Naive thymus-derived CD4-positive, alpha-beta T cell (primary cell): ENCODE measurements at regions of chr6 and their contacts with region 1.

Region 1: GRCh38 chr6:16206595-16207037 is 31.8 kb upstream of the GMPR start:
- DNase-seq: peak in 7 of 9 donors; percentile 19 to 63 (median 54)
- ATAC-seq: peak; percentile 86
- H3K4me3 ChIP-seq: no peak overlapping the region
- H3K4me3 Mint-ChIP-seq: no peak overlapping the region
- H3K27ac ChIP-seq: no peak overlapping the region
- H3K27ac Mint-ChIP-seq: peak overlapping the region in 1 of 9 donors; percentile 48
- H3K4me1 ChIP-seq: no peaks in the 10 kb centered on the region
- H3K4me1 Mint-ChIP-seq: peaks cover 0 to 6% (median 0%) of the 10 kb centered on the region in 7 donors
- H3K27me3 ChIP-seq: no peaks in the 10 kb centered on the region
- H3K27me3 Mint-ChIP-seq: peaks cover 5 to 25% (median 19%) of the 10 kb centered on the region in 5 donors

Region 2: DNA sequence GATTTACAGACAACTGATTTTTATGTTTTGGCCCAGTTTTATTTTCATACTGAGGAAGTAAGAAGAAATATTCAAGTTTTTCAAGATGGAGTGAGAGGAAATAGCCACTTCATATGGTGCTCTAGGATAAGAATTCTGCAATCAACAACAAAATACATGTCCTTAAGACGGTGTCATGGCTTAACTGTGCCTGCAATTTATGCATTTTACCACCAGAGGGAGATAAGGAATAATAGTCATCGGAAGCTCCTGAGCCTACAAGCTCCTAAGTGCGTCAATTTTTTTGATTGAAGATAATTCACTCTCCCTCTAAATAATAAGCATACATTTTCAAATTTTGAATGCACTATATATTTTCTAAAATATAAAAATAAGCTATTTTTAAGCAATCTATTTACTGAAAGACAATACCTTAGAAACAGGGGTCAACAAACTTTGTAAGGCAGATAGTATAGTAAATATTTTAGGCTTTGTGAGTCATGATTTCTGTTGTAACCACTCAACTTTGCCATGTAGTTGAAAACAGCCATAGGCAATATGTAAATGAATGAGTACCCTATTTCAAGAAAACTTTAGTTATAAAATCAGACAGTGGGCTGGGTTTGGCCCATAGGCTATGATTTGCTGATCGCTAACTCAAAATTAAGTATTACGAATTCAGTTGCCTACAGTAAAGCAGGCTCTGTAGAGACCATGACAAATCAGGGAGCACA is 312.9 kb before region 1 on chr6:
- CTCF ChIA-PET with region 1: no interaction called
- POLR2A ChIA-PET with region 1: no interaction called
- intact Hi-C with region 1: loop called in 1 of 2 experiments (anchors 10 kb)
- DNase-seq: peak in 1 of 9 donors; percentile 5
- ATAC-seq: no peak
- H3K4me3 ChIP-seq: no peak overlapping the region
- H3K4me3 Mint-ChIP-seq: no peak overlapping the region
- H3K27ac ChIP-seq: no peak overlapping the region
- H3K27ac Mint-ChIP-seq: no peak overlapping the region
- H3K4me1 ChIP-seq: no peaks in the 10 kb centered on the region
- H3K4me1 Mint-ChIP-seq: peaks cover 0 to 2% (median 0%) of the 10 kb centered on the region in 7 donors
- H3K27me3 ChIP-seq: no peaks in the 10 kb centered on the region
- H3K27me3 Mint-ChIP-seq: peaks cover 0 to 7% (median 5%) of the 10 kb centered on the region in 5 donors

Region 3: DNA sequence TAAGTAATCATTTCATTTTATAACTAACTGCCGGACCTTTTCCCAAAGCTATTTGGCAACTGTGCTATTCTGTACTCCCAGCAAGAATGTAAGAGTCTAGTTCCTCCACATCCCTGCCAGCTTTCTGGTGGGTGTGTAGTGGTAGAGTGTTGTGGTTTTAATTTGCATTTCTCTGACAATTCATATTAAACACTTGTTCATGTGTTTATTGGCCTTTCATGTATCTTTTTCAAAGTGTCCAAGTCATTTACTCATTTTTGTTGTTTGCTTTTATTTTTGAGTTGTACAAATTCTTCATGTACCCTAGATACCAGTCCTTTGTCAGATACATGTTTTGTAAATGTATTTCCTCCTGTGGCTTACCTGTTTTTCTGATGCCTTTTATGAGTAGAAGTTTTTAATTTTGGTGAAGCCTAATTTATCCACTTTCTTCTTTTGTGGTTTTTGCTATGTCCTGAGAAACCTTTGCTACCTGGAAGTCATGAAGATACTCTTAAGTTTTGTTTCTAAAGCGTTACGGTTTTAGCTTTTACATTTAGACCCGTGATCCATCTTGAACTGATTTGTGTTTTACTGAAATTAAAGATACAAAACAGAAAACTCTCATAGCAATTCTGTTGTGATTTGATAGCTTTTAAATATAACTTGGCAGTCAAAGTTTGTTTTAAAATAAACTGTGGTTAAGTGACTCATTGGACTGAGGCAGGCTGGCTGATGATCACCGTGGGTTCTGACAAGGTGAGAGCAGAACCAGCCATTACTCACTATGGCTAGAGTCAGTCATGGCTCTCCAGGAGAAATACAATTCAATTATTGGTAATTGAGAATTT is 69.8 kb before region 1 on chr6:
- CTCF ChIA-PET with region 1: no interaction called
- POLR2A ChIA-PET with region 1: no interaction called
- intact Hi-C with region 1: loop called in 1 of 2 experiments (anchors 2 kb)
- DNase-seq: peak in 6 of 9 donors; percentile 24 to 50 (median 32)
- ATAC-seq: peak; percentile 48
- H3K4me3 ChIP-seq: peak overlapping the region; percentile 35
- H3K4me3 Mint-ChIP-seq: peak overlapping the region; percentile 46 to 100 (median 82)
- H3K27ac ChIP-seq: no peak overlapping the region
- H3K27ac Mint-ChIP-seq: peak overlapping the region; percentile 49 to 90 (median 71)
- H3K4me1 ChIP-seq: peaks cover 68 to 75% of the 10 kb centered on the region in 2 donors
- H3K4me1 Mint-ChIP-seq: peaks cover 71 to 100% (median 97%) of the 10 kb centered on the region in 7 donors
- H3K27me3 ChIP-seq: no peaks in the 10 kb centered on the region
- H3K27me3 Mint-ChIP-seq: no peaks in the 10 kb centered on the region

Region 4: GRCh38 chr6:16168858-16169257 is 37.8 kb before region 1 on chr6:
- CTCF ChIA-PET with region 1: no interaction called
- POLR2A ChIA-PET with region 1: no interaction called
- intact Hi-C with region 1: no loop called
- DNase-seq: no peak
- ATAC-seq: peak; percentile 41
- H3K4me3 ChIP-seq: no peak overlapping the region
- H3K4me3 Mint-ChIP-seq: peak overlapping the region in 1 of 10 donors; percentile 7
- H3K27ac ChIP-seq: no peak overlapping the region
- H3K27ac Mint-ChIP-seq: peak overlapping the region in 1 of 9 donors; percentile 7
- H3K4me1 ChIP-seq: peaks cover 0 to 9% of the 10 kb centered on the region in 2 donors
- H3K4me1 Mint-ChIP-seq: peaks cover 9 to 34% (median 26%) of the 10 kb centered on the region in 7 donors
- H3K27me3 ChIP-seq: no peaks in the 10 kb centered on the region
- H3K27me3 Mint-ChIP-seq: peaks cover 0 to 39% (median 0%) of the 10 kb centered on the region in 5 donors